Mammary epithelial cell (primary cell): ENCODE measurements at regions of chr5 and their contacts with region 1.

Region 1: DNA sequence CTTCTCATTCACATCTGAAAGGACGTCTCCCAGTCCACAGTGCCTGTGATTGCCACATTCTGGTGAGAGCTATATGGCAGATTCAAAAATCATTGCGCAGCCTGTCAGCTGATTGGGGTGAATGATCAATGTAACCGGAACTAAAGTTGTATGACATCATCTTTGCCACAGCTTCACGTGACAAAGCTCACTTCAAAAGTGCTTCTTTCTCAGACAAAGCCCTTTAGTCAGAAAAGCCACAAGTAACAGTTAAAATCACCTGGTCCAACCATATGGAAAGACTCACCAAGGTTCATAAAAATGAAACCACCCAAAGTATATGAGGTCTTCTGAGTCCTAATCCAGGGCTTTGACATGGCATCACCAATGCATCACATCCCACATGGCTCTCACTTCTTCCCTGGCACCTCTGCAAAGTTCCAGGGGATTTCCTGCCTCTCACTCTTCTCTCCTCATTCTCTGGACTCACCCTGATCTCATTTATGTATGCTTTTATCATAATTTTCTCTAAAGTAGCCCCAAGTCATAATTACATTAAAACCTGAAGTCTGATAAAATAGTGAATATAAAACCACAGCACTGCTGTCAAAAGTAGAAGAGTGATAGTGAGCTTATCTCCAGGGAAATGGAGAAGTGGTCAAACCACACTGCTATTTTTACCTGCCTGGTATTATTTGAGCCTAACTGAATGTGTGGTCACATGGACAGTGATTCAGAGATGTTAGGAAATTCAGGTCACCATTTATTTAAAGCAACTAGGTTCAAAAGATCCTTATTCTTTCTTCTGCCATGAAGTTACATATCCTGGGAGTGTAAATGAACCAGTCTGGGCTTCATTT is 193.1 kb upstream of the PTGER4 start:
- DNase-seq: peak; percentile 81
- H3K4me3 ChIP-seq: no peak overlapping the region
- H3K27ac ChIP-seq: peak overlapping the region; percentile 39
- H3K4me1 ChIP-seq: peaks cover 14% of the 10 kb centered on the region
- H3K27me3 ChIP-seq: no peaks in the 10 kb centered on the region
- CTCF ChIP-seq: no peak

Region 2: GRCh38 chr5:40171971-40172370 is 314.7 kb before region 1 on chr5:
- CTCF ChIA-PET with region 1: no interaction called
- dilution Hi-C with region 1: no loop called
- in situ Hi-C with region 1: no loop called
- intact Hi-C with region 1: loop called (anchors 10 kb)
- DNase-seq: peak; percentile 79
- H3K4me3 ChIP-seq: no peak overlapping the region
- H3K27ac ChIP-seq: peak overlapping the region; percentile 16
- H3K4me1 ChIP-seq: peaks cover 3% of the 10 kb centered on the region
- H3K27me3 ChIP-seq: no peaks in the 10 kb centered on the region
- CTCF ChIP-seq: no peak

Region 3: DNA sequence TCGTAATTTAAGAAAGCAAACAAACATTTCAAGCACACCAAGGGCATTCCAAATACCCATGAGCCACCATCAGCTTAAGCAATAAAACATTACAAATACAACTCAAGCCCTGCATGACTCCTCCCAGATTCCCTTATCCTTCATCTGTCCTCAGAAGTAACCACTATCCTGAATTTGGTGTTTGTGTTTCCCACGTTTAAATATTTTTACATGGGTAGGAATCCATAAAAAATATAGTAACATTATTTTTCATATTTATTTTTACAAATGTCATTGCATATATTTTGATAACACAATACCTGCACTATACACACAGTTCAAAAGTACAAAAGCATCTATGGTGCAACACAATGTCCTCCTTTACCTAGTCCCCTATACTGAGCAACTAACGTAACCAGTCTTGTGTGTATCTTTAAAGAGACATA is 305.1 kb after region 1 on chr5:
- CTCF ChIA-PET with region 1: no interaction called
- dilution Hi-C with region 1: no loop called
- in situ Hi-C with region 1: no loop called
- intact Hi-C with region 1: no loop called
- DNase-seq: no peak
- H3K4me3 ChIP-seq: no peak overlapping the region
- H3K27ac ChIP-seq: no peak overlapping the region
- H3K4me1 ChIP-seq: peaks cover 10% of the 10 kb centered on the region
- H3K27me3 ChIP-seq: no peaks in the 10 kb centered on the region
- CTCF ChIP-seq: no peak